Activated CD4-positive, alpha-beta T cell treated with anti-CD3 and anti-CD28 coated beads for 36 hours (primary cell): ENCODE measurements at regions of chr17 and their contacts with region 1.

Region 1: GRCh38 chr17:78840725-78841611 is at the start of gene USP36:
- DNase-seq: peak; percentile 100
- ATAC-seq: peak; percentile 89
- H3K4me3 Mint-ChIP-seq: peak within 1 kb of the TSS; percentile 86
- H3K27ac Mint-ChIP-seq: peak within 1 kb of the TSS; percentile 96
- H3K4me1 Mint-ChIP-seq: peaks cover 44% of the 10 kb centered on the region
- H3K27me3 Mint-ChIP-seq: no peaks in the 10 kb centered on the region
- total RNA-seq, gene USP36: 90.1 to 92.5 TPM

Region 2: DNA sequence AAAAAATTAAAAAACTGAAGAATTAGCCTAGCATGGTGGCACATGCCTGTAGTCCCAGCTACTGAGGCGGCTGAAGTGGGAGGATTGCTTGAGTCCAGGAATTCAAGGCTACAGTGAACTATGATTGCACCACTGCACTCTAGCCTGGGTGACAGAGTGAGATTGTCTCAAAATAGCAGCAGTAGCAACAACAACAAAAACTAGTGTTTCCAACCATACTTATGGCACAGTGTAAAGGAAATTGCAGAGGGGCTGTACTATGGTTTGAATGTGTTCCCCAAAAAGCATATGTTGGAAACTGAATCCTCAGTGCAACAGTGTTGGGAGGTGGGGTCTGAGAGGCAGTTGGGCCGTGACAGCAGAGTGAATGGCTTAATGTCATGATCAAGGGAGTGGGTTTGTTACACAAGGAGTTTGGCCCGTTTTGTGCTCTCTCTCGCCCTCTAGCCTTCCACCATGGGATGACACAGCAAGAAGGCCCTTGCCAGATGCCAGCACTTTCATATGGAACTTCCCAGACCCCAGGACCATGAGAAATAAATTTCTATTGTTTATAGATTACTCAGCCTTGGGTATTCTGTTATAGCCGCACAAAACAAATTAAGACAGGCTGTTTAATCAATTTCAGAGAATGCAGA is 392.5 kb before region 1 on chr17:
- CTCF ChIA-PET with region 1: no interaction called
- POLR2A ChIA-PET with region 1: interaction called, 3 read pairs
- intact Hi-C with region 1: loop called in 1 of 2 experiments (anchors 5 kb)
- DNase-seq: peak; percentile 33
- ATAC-seq: peak; percentile 19
- H3K4me3 Mint-ChIP-seq: no peak overlapping the region
- H3K27ac Mint-ChIP-seq: no peak overlapping the region
- H3K4me1 Mint-ChIP-seq: no peaks in the 10 kb centered on the region
- H3K27me3 Mint-ChIP-seq: no peaks in the 10 kb centered on the region

Region 3: GRCh38 chr17:78497115-78497540 is 343.8 kb before region 1 on chr17:
- CTCF ChIA-PET with region 1: no interaction called
- POLR2A ChIA-PET with region 1: no interaction called
- intact Hi-C with region 1: loop called in 1 of 2 experiments (anchors 1 kb)
- DNase-seq: peak; percentile 76
- ATAC-seq: peak; percentile 79
- H3K4me3 Mint-ChIP-seq: no peak overlapping the region
- H3K27ac Mint-ChIP-seq: no peak overlapping the region
- H3K4me1 Mint-ChIP-seq: no peaks in the 10 kb centered on the region
- H3K27me3 Mint-ChIP-seq: no peaks in the 10 kb centered on the region

Region 4: GRCh38 chr17:78736526-78737079 is 104.4 kb before region 1 on chr17:
- CTCF ChIA-PET with region 1: no interaction called
- POLR2A ChIA-PET with region 1: no interaction called
- intact Hi-C with region 1: no loop called
- DNase-seq: peak; percentile 79
- ATAC-seq: peak; percentile 84
- H3K4me3 Mint-ChIP-seq: peak overlapping the region; percentile 80
- H3K27ac Mint-ChIP-seq: peak overlapping the region; percentile 90
- H3K4me1 Mint-ChIP-seq: peaks cover 89% of the 10 kb centered on the region
- H3K27me3 Mint-ChIP-seq: no peaks in the 10 kb centered on the region

Region 5: DNA sequence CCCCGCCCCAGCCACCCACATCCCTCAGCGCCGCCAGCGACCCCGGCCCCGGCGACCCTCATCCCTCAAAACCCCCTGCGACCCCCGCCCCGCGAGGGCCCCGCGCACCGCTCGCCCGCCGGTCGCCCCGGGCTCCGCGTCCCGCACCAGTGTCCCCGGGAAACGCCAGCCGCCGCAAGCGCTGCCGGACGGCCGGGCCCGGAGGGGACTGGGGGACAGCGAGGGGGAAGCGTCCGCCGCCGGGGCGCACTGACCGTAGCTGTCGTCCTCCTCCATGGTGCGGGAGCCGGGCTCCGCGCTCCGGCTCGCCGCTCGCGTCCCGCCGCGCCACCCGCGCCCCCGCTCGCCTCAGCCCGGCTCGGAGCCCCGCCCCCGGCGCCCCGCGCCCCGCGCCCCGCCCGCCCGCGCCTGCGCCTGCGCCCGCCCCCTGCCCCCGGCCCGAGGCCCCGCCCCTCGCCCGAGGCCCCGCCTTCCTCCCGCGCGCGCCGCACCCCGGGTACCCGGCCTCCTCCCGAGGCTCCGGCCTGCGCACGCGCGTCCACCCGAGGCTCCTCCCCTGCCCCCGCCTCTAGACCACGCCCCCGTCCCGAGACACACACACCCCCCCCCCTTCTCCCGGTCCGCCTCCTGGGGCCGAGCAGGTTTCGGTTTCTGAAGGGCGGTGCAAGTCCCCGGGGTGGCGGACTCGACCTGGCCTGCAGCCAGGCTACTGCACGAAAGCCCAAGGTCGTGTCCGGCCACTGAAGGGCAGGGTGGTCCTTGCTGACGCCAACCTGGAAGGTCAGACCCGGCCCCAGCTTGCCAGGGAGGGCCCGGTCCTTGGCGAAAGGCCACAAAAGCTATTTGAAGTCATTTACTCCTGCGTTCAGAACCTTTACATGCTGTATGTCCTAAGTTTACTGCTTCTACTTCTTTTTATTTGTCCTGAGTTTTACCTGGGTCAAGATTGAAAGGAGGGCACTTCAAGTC is 58.7 kb before region 1 on chr17 and contains the start of gene CYTH1:
- CTCF ChIA-PET with region 1: interaction called, 3 read pairs
- POLR2A ChIA-PET with region 1: no interaction called
- intact Hi-C with region 1: loop called (anchors 1 to 2 kb)
- DNase-seq: peak; percentile 98
- ATAC-seq: peak; percentile 73
- H3K4me3 Mint-ChIP-seq: peak within 1 kb of the TSS; percentile 77
- H3K27ac Mint-ChIP-seq: peak within 1 kb of the TSS; percentile 97
- H3K4me1 Mint-ChIP-seq: peaks cover 54% of the 10 kb centered on the region
- H3K27me3 Mint-ChIP-seq: no peaks in the 10 kb centered on the region
- total RNA-seq, gene CYTH1: 109 to 130 TPM

Region 6: GRCh38 chr17:78970834-78971773 is 130.1 kb after region 1 on chr17:
- CTCF ChIA-PET with region 1: interaction called, 3 read pairs
- POLR2A ChIA-PET with region 1: no interaction called
- intact Hi-C with region 1: loop called in 1 of 2 experiments (anchors 1 kb)
- DNase-seq: peak; percentile 89
- ATAC-seq: peak; percentile 80
- H3K4me3 Mint-ChIP-seq: no peak overlapping the region
- H3K27ac Mint-ChIP-seq: peak overlapping the region; percentile 17
- H3K4me1 Mint-ChIP-seq: peaks cover 9% of the 10 kb centered on the region
- H3K27me3 Mint-ChIP-seq: no peaks in the 10 kb centered on the region

Region 7: GRCh38 chr17:79074650-79075445 is 233.9 kb after region 1 on chr17 and contains the start of gene ENGASE:
- CTCF ChIA-PET with region 1: no interaction called
- POLR2A ChIA-PET with region 1: no interaction called
- intact Hi-C with region 1: loop called in 1 of 2 experiments (anchors 1 kb)
- DNase-seq: peak; percentile 96
- ATAC-seq: peak; percentile 99
- H3K4me3 Mint-ChIP-seq: peak within 1 kb of the TSS; percentile 79
- H3K27ac Mint-ChIP-seq: peak within 1 kb of the TSS; percentile 49
- H3K4me1 Mint-ChIP-seq: peaks cover 14% of the 10 kb centered on the region
- H3K27me3 Mint-ChIP-seq: no peaks in the 10 kb centered on the region
- total RNA-seq, gene ENGASE: 17.3 to 23.7 TPM